ENCODE measurements at regions of chr7 and their contacts with region 1.

Region 1: GRCh38 chr7:93902777-93903423 is 3.5 kb upstream of the GNGT1 start:
- DNase-seq: no peak
- H3K4me3 ChIP-seq: no peak overlapping the region
- H3K27ac ChIP-seq: no peak overlapping the region
- H3K4me1 ChIP-seq: peaks cover 8% of the 10 kb centered on the region; the same call in 1 of the 2 replicates
- H3K27me3 ChIP-seq: no peaks in the 10 kb centered on the region
- CTCF ChIP-seq: peak; percentile 80

Region 2: GRCh38 chr7:92933810-92934449 is 969.0 kb before region 1 on chr7:
- CTCF ChIA-PET with region 1: interaction called, 19 read pairs
- POLR2A ChIA-PET with region 1: no interaction called
- intact Hi-C with region 1: no loop called
- DNase-seq: peak; percentile 55 to 97
- H3K4me3 ChIP-seq: peak overlapping the region; percentile 14; the same call in 1 of the 2 replicates
- H3K27ac ChIP-seq: peak overlapping the region; percentile 64
- H3K4me1 ChIP-seq: peaks cover 25% of the 10 kb centered on the region
- H3K27me3 ChIP-seq: no peaks in the 10 kb centered on the region
- CTCF ChIP-seq: no peak

Region 3: GRCh38 chr7:93861325-93861949 is 41.5 kb before region 1 on chr7:
- CTCF ChIA-PET with region 1: no interaction called
- POLR2A ChIA-PET with region 1: no interaction called
- intact Hi-C with region 1: no loop called
- DNase-seq: no peak
- H3K4me3 ChIP-seq: no peak overlapping the region
- H3K27ac ChIP-seq: no peak overlapping the region
- H3K4me1 ChIP-seq: peaks cover 4% of the 10 kb centered on the region; the same call in 1 of the 2 replicates
- H3K27me3 ChIP-seq: no peaks in the 10 kb centered on the region
- CTCF ChIP-seq: peak; percentile 54; the same call in 1 of the 2 replicates

Region 4: GRCh38 chr7:94205529-94205928 is 302.6 kb after region 1 on chr7:
- CTCF ChIA-PET with region 1: no interaction called
- POLR2A ChIA-PET with region 1: no interaction called
- intact Hi-C with region 1: no loop called
- DNase-seq: no peak
- H3K4me3 ChIP-seq: no peak overlapping the region
- H3K27ac ChIP-seq: no peak overlapping the region
- H3K4me1 ChIP-seq: no peaks in the 10 kb centered on the region
- H3K27me3 ChIP-seq: no peaks in the 10 kb centered on the region
- CTCF ChIP-seq: no peak

Region 5: GRCh38 chr7:95376632-95377315 is 1473.9 kb after region 1 on chr7:
- CTCF ChIA-PET with region 1: interaction called, 13 read pairs
- POLR2A ChIA-PET with region 1: no interaction called
- intact Hi-C with region 1: no loop called
- DNase-seq: no peak
- H3K4me3 ChIP-seq: no peak overlapping the region
- H3K27ac ChIP-seq: no peak overlapping the region
- H3K4me1 ChIP-seq: no peaks in the 10 kb centered on the region
- H3K27me3 ChIP-seq: no peaks in the 10 kb centered on the region
- CTCF ChIP-seq: no peak